Left lung (tissue), 14 donors: ENCODE measurements at regions of chr10 and their contacts with region 1.

Region 1: DNA sequence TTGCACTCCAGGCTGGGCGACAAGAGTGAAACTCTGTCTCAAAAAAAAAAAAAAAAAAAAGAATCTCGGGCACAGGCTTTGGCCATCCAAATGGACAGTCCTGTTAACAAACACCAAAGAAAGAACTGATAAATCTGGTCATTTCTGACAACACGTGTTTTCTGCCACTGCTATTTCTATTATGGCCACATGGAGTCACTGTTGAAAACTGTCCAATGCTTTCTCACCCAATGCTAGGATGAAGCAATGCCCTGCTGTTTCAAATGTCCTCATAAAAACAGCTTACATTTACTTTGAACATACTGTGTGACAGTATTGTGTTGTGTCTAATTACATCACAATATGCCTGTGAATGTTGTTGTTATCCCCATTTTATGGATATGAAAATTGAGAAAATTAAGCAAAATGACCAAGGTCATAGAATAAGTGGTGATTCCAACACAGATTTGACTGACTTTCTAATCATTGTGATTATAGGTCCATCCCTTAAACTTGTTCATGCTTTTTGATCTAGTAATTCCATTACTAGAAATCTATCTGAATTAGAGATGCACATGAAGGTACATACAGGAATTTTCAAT is 19.9 kb upstream of the MAP3K8 start:
- DNase-seq: peak in 1 of 4 donors; percentile 72
- ATAC-seq: peak; percentile 91
- H3K4me3 ChIP-seq: no peak overlapping the region
- H3K27ac ChIP-seq: no peak overlapping the region
- H3K4me1 ChIP-seq: peaks cover 5 to 37% of the 10 kb centered on the region in 2 donors
- H3K27me3 ChIP-seq: no peaks in the 10 kb centered on the region
- CTCF ChIP-seq: peak; percentile 65 to 67

Region 2: GRCh38 chr10:30534465-30535144 is 120.5 kb after region 1 on chr10:
- intact Hi-C with region 1: loop called in 1 of 2 experiments (anchors 10 kb)
- DNase-seq: peak in 3 of 4 donors; percentile 54 to 75 (median 58)
- ATAC-seq: peak; percentile 87
- H3K4me3 ChIP-seq: no peak overlapping the region
- H3K27ac ChIP-seq: no peak overlapping the region
- H3K4me1 ChIP-seq: peaks cover 5 to 83% of the 10 kb centered on the region in 2 donors
- H3K27me3 ChIP-seq: no peaks in the 10 kb centered on the region
- CTCF ChIP-seq: peak; percentile 84 to 90